SK-N-SH (cell line): ENCODE measurements at regions of chr11 and their contacts with region 1.

Region 1: DNA sequence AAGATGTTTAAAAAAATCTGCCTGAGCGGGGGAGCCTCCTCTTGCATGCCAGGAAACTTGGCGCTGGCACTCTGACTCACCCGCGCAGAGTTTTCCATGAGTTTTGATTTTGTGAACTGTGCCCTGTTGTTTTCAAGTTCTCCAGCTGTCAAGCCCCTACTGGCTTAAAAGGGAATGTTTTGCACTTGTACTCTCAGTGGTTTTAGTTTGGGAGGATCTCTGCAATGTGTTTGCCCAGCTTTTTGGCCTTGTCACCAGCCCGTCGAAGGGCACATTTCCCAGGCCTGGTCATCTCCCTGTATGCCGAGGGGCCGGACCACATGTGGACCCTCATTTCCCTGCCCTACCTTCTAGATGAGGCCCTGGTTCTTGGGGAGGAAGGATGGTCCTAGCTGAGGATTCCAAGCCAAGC is 12.2 kb downstream of the MRGPRF start:
- DNase-seq: peak; percentile 60
- H3K4me3 ChIP-seq: no peak overlapping the region
- H3K27ac ChIP-seq: peak overlapping the region; percentile 38 to 60; a peak in 3 of 4 replicates
- H3K4me1 ChIP-seq: peaks cover 14 to 40% of the 10 kb centered on the region in 2 experiments
- H3K27me3 ChIP-seq: no peaks in the 10 kb centered on the region
- CTCF ChIP-seq: peak; percentile 63
- EP300 ChIP-seq: no peak
- RAD21 ChIP-seq: peak; percentile 36

Region 2: DNA sequence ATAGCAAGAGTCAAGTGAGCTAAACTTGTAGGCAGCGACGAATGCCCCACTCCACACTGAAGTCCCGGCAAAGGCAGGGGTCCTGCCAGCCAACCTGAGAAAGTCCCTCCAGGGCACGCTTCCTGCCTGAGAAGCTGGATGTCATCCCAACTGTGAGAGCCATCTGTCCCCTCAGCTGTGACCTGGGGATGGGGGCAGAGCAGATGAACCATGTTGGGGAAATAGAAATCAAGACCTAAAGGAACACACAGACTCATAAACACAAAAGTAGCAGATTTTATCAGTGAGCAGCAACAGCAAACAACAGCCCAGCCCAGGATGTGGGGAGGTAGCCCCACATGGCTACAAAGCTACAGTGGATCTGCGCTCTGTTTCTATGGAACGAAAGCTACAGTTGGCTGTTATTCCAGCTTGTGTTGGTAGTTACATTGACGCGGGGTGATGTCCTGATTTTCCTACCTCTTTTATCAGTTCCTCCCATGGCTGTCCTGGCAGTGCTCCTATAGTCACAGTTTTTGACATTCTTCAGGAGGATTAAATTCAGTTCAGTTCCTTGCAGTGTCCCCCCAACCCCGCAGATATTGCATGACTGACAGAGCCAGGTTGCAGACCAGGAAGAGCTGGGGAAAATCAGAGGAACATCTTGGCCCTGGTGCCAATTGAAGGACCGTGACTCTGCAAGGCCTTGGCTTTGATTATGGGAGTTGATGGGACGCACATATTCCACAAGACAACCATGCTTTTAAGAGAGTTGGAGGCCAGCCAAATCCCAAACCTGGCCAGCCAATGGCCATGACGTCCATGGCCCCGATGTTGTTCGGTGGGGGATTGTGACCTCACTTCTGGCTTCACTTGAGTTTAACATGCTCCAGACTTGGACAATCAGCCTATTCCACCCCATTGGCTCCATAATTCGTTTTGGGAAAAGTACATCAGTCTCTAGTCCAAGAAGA is 34.7 kb before region 1 on chr11:
- CTCF ChIA-PET with region 1: no interaction called
- POLR2A ChIA-PET with region 1: no interaction called
- DNase-seq: no peak
- H3K4me3 ChIP-seq: no peak overlapping the region
- H3K27ac ChIP-seq: no peak overlapping the region
- H3K4me1 ChIP-seq: peaks cover 0 to 2% of the 10 kb centered on the region in 2 experiments; a peak in 1 of 4 replicates
- H3K27me3 ChIP-seq: no peaks in the 10 kb centered on the region; the same call in 1 of the 2 replicates
- CTCF ChIP-seq: no peak
- EP300 ChIP-seq: no peak
- RAD21 ChIP-seq: no peak

Region 3: DNA sequence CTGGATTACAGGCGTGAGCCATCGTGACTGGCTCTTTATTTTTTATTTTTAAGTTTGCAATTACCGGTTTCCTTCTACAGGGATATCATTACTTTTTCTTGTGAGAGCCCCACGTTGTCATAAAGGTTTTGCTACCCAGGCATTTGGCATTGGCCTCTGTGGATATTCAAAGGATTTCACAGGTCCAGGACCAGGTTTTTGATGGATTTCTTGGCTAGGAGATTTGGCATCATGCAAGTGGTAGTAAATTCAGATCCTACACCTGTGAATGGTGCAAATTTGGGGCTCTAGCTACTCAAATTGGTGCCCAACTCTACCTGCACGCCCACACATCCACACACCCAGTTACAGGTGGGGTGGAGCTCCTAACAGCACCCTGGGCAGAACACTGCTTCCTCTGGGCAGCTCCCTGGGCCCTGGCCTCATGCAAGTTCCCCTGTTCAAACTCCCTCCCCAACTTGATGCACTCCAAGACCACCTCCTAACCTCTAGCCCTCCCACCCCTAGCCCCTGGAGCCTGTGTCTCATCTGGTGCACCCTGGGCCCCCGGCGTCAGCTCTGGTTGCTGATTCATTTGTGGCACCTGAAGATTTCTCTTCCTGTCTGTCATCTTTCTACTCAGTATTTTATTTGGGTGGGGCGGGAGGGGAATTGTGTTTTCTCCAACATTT is 10.8 kb before region 1 on chr11:
- CTCF ChIA-PET with region 1: interaction called, 13 read pairs
- POLR2A ChIA-PET with region 1: no interaction called
- DNase-seq: no peak
- H3K4me3 ChIP-seq: no peak overlapping the region
- H3K27ac ChIP-seq: no peak overlapping the region
- H3K4me1 ChIP-seq: peaks cover 0 to 4% of the 10 kb centered on the region in 2 experiments; a peak in 1 of 4 replicates
- H3K27me3 ChIP-seq: no peaks in the 10 kb centered on the region
- CTCF ChIP-seq: no peak
- EP300 ChIP-seq: no peak
- RAD21 ChIP-seq: no peak

Region 4: DNA sequence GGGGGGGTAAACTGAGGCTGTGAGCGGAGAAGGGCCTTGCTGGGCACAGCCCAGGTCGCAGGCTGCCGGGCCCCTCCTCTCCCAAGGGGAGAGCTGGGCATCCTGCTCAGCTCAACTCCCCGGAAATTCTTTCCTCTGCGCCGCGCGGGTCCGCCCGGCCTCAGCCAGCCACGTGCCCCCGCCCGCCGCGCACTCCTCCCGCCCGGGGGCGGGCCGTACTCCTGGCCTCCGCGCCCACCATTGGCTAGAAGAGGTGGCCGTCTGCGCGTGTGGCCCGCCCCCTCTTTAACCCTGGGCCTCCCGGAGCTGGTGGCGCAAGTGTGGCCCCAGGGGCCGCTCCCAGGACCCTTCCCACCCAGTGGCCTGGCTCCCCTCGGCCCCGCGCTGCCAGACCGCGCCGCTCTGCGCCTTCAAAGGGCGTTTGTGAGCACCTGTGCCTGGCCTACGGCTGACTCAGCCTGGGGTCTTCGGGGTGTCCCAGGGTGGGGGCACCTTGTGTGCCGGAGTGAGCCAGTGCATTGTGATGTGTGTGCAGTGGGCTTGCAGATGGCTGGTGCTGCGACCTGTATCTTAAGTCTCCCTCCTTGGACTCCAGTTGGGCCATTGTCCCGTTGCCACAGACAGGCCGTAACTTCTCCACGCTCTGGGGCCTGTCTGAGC is 10.3 kb after region 1 on chr11:
- CTCF ChIA-PET with region 1: interaction called, 26 read pairs
- POLR2A ChIA-PET with region 1: interaction called, 3 read pairs
- DNase-seq: peak; percentile 40
- H3K4me3 ChIP-seq: no peak overlapping the region
- H3K27ac ChIP-seq: no peak overlapping the region
- H3K4me1 ChIP-seq: peaks cover 28 to 53% of the 10 kb centered on the region in 2 experiments; a peak in 3 of 4 replicates
- H3K27me3 ChIP-seq: no peaks in the 10 kb centered on the region
- CTCF ChIP-seq: no peak
- EP300 ChIP-seq: no peak
- RAD21 ChIP-seq: no peak

Region 5: DNA sequence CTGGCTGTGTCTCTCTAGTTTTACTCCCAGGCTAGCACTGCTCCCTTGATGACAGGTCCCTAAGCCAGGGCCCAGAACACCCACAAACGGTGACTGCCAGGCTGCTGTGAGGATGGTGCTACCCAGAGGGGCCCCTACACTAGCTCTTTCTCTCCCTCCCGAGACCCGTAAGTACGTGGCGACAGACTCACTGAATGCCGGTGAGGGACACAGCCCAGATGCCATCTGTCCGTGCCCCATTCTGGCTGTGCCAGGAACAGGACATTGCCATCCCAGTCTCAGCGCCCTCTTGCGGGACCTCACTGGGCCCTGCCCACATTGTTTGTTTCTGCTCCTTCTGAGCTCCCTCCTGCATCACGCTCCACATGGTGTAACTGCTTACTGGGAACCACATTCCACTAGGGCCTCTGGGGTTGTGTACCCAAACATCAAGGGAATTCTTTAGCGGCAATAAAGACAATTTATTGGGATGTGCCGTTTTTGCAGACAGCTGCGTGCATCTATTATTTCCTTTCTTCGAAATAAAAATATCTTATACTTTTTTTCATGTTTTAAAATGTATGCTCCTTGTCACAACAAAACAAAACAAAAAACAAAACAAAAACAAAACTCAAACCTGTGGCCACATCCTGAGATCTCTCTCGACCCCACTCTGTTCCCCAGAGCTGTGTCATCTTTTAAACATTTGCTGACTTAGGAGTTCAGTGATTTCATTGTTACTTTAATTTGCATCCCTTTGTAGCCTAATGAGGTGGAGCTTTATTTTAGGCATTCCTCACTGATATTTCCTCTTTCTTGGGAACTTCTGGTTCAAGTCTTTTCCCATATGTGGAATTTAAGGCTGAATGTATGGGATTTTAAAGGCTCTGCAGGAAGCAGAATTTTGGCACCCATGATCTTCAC is 43.5 kb after region 1 on chr11:
- CTCF ChIA-PET with region 1: interaction called, 20 read pairs
- POLR2A ChIA-PET with region 1: no interaction called
- DNase-seq: peak; percentile 77
- H3K4me3 ChIP-seq: no peak overlapping the region
- H3K27ac ChIP-seq: no peak overlapping the region; a peak in 1 of 4 replicates
- H3K4me1 ChIP-seq: peaks cover 8 to 25% of the 10 kb centered on the region in 2 experiments; a peak in 3 of 4 replicates
- H3K27me3 ChIP-seq: no peaks in the 10 kb centered on the region
- CTCF ChIP-seq: peak; percentile 73
- EP300 ChIP-seq: no peak
- RAD21 ChIP-seq: peak; percentile 74

Region 6: DNA sequence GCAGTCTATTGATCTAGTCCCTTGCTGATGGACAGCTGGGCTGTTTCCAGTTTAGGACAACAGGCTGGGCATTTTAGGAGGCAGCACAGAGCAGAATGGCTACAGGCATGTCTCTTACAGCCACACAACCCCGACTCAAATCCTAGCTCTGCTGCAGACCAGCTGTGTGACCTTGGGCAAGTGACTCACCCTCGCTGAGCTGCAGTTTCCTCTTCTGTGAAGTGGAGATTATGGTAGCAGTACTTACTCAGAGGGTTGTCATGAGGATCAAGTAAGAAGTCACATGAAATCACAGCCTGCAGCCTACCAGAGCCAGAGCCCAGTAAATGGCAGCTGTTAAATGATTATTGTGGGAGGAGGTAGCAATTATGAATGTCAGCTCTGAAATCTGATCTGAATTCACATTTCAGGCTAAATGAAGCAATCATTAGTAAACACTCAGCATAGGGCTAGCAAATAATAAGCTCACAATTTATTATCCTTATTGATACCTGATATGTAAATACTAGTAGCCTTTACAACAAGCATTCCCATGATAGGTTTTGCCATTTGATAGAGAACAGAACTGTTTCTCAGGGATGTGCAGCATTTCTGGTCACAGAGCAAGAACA is 352.0 kb after region 1 on chr11:
- CTCF ChIA-PET with region 1: no interaction called
- POLR2A ChIA-PET with region 1: no interaction called
- DNase-seq: no peak
- H3K4me3 ChIP-seq: no peak overlapping the region
- H3K27ac ChIP-seq: peak overlapping the region in 1 of 2 experiments; percentile 77; a peak in 2 of 4 replicates
- H3K4me1 ChIP-seq: peaks cover 3 to 34% of the 10 kb centered on the region in 2 experiments; a peak in 3 of 4 replicates
- H3K27me3 ChIP-seq: no peaks in the 10 kb centered on the region
- CTCF ChIP-seq: no peak
- EP300 ChIP-seq: peak in 1 of 2 experiments; percentile 62; a peak in 1 of 4 replicates
- RAD21 ChIP-seq: no peak